ENCODE measurements at regions of chr6 and their contacts with region 1.

Region 1: DNA sequence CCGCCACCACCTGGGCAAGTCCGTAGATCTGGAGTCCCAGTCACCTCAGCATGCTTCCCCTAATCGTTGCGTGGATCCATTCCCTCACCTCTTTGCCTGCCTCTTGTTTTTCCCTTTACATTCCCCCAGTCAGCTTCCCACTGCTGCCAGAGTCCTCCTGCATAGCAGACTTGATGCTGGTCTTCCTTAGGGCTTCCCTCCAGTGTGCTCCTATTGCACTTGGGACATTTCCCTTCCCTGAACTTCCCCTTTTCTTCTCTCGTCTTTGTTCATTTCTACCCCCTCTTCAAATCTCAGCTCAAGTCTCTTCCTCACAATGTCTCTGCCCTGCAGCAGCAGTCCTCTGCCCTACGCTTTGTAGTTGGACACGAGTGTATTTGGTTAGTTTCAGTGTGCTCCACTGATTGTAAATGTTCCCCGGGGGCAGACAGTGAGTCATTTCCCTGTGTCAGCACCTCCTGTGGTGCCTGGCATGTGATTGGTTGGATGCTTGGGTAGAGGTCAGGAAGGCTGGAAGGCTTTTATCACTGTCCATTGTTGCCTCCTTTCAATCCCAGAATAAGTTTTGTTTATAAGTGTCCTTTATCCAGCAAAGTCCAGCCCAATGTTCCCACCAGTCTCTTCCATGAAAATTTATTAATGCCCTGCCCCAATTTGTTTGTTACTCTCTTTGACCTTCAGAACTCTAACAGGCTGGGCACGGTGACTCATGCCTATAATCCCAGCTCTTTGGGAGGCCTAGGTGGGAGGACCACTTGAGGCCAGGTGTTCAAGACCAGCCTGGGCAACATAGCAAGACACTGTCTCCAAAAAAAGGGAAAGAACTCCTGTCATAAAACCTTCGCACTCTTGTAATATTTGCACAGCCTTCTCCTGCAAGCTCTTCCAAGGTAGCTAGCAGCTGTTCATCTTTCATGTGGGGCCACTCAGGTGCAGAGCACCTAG is 38.3 kb downstream of the FAM120B start:
- DNase-seq: peak; percentile 97
- H3K4me3 ChIP-seq: peak overlapping the region in 1 of 3 experiments; percentile 12
- H3K27ac ChIP-seq: peak overlapping the region; percentile 85
- H3K4me1 ChIP-seq: peaks cover 17% of the 10 kb centered on the region
- H3K27me3 ChIP-seq: no peaks in the 10 kb centered on the region
- CTCF ChIP-seq: no peak
- POLR2A ChIP-seq: peak; percentile 50

Region 2: DNA sequence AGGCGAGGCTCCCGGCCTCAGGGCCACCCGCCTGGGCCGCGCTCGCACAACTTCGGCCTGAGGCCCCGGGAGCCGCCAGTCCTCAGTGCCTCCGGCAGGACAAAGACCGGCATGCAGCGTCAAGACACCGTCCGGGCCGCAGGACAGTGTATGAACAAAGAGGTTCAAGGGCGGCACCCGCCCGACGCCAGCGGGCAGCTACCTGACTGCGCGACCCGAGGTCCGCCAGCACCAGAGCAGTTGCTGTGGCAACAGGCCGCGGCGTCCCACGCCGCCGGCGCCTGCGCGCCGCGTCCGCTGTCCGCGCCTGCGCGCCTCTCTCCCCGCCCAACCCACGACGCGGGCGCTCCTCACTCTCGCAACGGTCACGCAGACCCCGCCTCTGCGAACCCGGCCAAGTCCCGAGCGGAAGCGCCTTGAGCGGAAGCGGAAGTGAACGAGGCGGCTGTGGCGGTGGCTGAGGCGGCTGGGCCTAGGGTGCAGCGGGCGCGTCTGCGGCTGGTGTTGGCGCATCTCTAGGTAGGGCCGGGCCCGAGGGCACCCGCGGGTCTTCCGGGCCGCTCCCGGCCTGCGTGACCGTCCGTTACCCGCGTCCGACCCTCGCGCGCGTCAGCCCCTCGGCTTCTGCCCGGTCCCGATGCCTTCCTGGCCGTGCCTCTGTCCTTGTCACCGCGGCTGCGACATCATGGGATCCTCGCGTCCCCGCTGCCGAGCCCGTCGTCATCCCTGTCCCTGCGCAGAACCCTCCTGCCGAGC is 38.4 kb before region 1 on chr6 and contains the start of gene FAM120B:
- CTCF ChIA-PET with region 1: no interaction called
- POLR2A ChIA-PET with region 1: no interaction called
- dilution Hi-C with region 1: no loop called
- intact Hi-C with region 1: loop called (anchors 1 kb)
- DNase-seq: peak; percentile 96
- H3K4me3 ChIP-seq: peak within 1 kb of the TSS; percentile 48 to 86 (median 78)
- H3K27ac ChIP-seq: peak within 1 kb of the TSS; percentile 73
- H3K4me1 ChIP-seq: peaks cover 11% of the 10 kb centered on the region
- H3K27me3 ChIP-seq: no peaks in the 10 kb centered on the region
- CTCF ChIP-seq: no peak
- POLR2A ChIP-seq: peak; percentile 97
- total RNA-seq, gene FAM120B: 28.1 and 28.2 TPM in 2 replicates

Region 3: GRCh38 chr6:170405311-170405975 is 60.5 kb after region 1 on chr6:
- CTCF ChIA-PET with region 1: no interaction called
- POLR2A ChIA-PET with region 1: no interaction called
- dilution Hi-C with region 1: no loop called
- intact Hi-C with region 1: loop called (anchors 2 kb)
- DNase-seq: peak; percentile 80
- H3K4me3 ChIP-seq: no peak overlapping the region
- H3K27ac ChIP-seq: peak overlapping the region; percentile 97
- H3K4me1 ChIP-seq: peaks cover 24% of the 10 kb centered on the region
- H3K27me3 ChIP-seq: peaks cover 0 to under 1% of the 10 kb centered on the region in 2 experiments
- CTCF ChIP-seq: no peak
- POLR2A ChIP-seq: no peak

Region 4: GRCh38 chr6:170459451-170459850 is 114.5 kb after region 1 on chr6:
- CTCF ChIA-PET with region 1: no interaction called
- POLR2A ChIA-PET with region 1: no interaction called
- dilution Hi-C with region 1: no loop called
- intact Hi-C with region 1: no loop called
- DNase-seq: peak; percentile 30
- H3K4me3 ChIP-seq: peak overlapping the region in 2 of 3 experiments; percentile 15 to 36
- H3K27ac ChIP-seq: no peak overlapping the region
- H3K4me1 ChIP-seq: peaks cover 2% of the 10 kb centered on the region
- H3K27me3 ChIP-seq: no peaks in the 10 kb centered on the region
- CTCF ChIP-seq: no peak
- POLR2A ChIP-seq: no peak

Measured in endothelial cell of umbilical vein (primary cell).